ENCODE measurements at regions of chrX and their contacts with region 1.

Region 1: DNA sequence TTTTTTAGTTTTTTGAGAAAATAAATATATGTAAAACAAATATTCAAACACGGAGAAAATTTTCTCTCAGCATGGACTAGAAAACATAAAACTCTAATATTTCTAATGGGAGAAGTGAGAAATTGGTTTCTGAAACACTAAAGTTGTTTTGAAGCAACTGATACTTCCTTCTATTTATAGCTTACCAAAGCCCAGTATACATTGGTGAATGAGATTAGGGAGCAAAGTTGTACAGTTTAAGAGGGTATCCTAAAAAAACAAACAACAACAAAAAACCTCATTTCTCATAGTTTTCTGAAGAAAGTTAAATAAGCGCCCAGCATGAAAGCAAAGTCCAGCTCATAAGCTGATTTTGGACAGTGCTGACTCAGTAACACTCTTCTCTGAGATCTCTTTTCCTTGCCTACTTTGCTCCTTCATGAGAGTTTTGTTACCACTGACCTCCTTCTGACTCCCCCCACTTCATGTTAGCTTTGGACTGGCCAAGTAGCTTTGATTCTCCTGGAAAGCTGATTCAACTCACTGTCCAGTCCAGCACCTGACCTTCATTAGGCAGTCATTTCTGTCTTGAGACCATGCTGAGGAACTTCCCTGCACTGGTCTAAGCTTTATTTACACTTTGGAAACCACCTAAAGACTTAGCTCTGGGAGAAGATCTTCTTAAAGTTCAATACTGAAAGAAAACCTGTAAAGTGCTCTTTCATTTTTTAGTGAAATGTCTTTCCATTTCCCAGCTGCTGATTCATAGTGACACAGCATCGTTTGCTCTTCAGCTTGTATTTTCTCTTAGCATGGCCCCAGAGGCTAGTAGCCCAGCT is 21.8 kb upstream of the P2RY10 start:
- DNase-seq: no peak
- H3K4me3 Mint-ChIP-seq: peak overlapping the region; percentile 45
- H3K27ac Mint-ChIP-seq: peak overlapping the region; percentile 91
- H3K4me1 Mint-ChIP-seq: peaks cover 13% of the 10 kb centered on the region
- H3K27me3 Mint-ChIP-seq: no peaks in the 10 kb centered on the region

Region 2: GRCh38 chrX:77527233-77528001 is 1396.0 kb before region 1 on chrX:
- CTCF ChIA-PET with region 1: no interaction called
- POLR2A ChIA-PET with region 1: no interaction called
- intact Hi-C with region 1: loop called (anchors 10 kb)
- DNase-seq: no peak
- H3K4me3 Mint-ChIP-seq: no peak overlapping the region
- H3K27ac Mint-ChIP-seq: peak overlapping the region; percentile 69
- H3K4me1 Mint-ChIP-seq: peaks cover 21% of the 10 kb centered on the region
- H3K27me3 Mint-ChIP-seq: no peaks in the 10 kb centered on the region

Region 3: GRCh38 chrX:78934866-78935265 is 11.5 kb after region 1 on chrX:
- CTCF ChIA-PET with region 1: no interaction called
- POLR2A ChIA-PET with region 1: no interaction called
- intact Hi-C with region 1: no loop called
- DNase-seq: no peak
- H3K4me3 Mint-ChIP-seq: no peak overlapping the region
- H3K27ac Mint-ChIP-seq: no peak overlapping the region
- H3K4me1 Mint-ChIP-seq: no peaks in the 10 kb centered on the region
- H3K27me3 Mint-ChIP-seq: no peaks in the 10 kb centered on the region

Region 4: DNA sequence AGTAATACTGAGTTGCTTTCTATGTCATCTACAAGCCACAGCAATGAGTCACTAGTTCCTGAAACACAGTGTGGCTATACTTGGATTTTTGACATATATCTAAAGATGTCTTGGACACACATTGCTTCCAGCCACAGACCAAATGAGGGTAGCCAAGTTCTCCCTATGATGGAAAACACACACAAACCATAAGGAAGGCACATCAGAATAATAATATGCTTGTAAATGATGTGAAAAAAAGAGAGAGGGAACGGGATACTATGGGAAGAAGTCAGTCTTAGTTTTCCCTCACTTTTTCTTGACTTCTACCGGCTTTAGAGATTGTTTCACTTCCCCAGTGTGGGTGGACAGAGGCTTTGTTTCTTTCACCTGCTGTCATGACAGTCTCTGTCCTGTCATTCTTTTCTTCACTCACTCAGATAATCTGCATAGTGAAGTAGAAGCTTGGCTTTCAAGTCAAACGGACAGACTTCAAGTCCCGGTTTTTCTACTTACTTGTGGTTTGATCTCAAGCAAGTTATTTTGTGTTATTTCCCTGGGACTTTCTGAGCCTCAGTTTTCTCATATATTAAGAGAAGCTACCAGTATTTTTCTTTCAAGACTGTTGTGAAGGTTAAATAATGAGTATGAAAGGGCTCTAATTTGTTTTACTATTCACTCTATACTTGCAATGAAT is 56.5 kb after region 1 on chrX:
- CTCF ChIA-PET with region 1: no interaction called
- POLR2A ChIA-PET with region 1: no interaction called
- intact Hi-C with region 1: loop called (anchors 2 kb)
- DNase-seq: peak; percentile 20
- H3K4me3 Mint-ChIP-seq: peak overlapping the region; percentile 73
- H3K27ac Mint-ChIP-seq: peak overlapping the region; percentile 97
- H3K4me1 Mint-ChIP-seq: peaks cover 18% of the 10 kb centered on the region
- H3K27me3 Mint-ChIP-seq: no peaks in the 10 kb centered on the region

Region 5: GRCh38 chrX:79036157-79036880 is 112.9 kb after region 1 on chrX:
- CTCF ChIA-PET with region 1: no interaction called
- POLR2A ChIA-PET with region 1: no interaction called
- intact Hi-C with region 1: no loop called
- DNase-seq: no peak
- H3K4me3 Mint-ChIP-seq: peak overlapping the region; percentile 20
- H3K27ac Mint-ChIP-seq: no peak overlapping the region
- H3K4me1 Mint-ChIP-seq: peaks cover 31% of the 10 kb centered on the region
- H3K27me3 Mint-ChIP-seq: no peaks in the 10 kb centered on the region

Region 6: DNA sequence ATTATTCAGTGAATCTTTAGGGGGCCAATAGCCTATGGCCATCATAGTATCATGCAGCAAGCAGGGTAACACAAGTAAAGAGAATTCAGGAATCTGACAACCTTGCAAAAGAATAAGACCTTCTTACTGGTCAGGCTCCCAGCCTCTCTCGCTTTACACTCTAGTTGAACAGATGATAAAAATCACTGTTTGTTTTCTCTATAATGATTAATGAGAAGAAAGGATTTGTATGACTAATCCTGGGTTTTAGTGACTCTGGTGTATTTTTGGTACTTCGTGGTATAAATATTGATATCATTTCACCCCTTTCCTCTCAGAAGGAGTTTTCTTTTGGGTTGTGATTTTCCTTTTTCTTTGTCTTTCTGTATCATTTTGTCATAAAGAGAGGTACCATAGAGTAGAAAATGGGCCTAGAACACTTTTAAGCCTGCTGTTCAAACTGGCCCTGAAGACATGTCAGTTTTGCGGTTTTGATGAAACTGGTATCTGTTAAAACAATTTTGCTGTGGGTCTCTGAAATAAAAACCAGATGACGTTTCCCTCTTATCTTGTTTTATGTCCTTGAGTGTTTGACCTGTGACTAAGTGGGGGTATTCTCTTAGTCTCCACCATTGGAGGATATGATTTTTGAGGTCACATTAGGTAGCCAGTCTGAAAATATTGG is 796.3 kb after region 1 on chrX:
- CTCF ChIA-PET with region 1: no interaction called
- POLR2A ChIA-PET with region 1: no interaction called
- intact Hi-C with region 1: no loop called
- DNase-seq: no peak
- H3K4me3 Mint-ChIP-seq: no peak overlapping the region
- H3K27ac Mint-ChIP-seq: no peak overlapping the region
- H3K4me1 Mint-ChIP-seq: no peaks in the 10 kb centered on the region
- H3K27me3 Mint-ChIP-seq: no peaks in the 10 kb centered on the region

Region 7: GRCh38 chrX:80550722-80551121 is 1627.3 kb after region 1 on chrX:
- CTCF ChIA-PET with region 1: no interaction called
- POLR2A ChIA-PET with region 1: no interaction called
- intact Hi-C with region 1: no loop called
- DNase-seq: no peak
- H3K4me3 Mint-ChIP-seq: no peak overlapping the region
- H3K27ac Mint-ChIP-seq: no peak overlapping the region
- H3K4me1 Mint-ChIP-seq: no peaks in the 10 kb centered on the region
- H3K27me3 Mint-ChIP-seq: no peaks in the 10 kb centered on the region